Heart right ventricle (tissue), 16 donors: ENCODE measurements at regions of chr4 and their contacts with region 1.

Region 1: GRCh38 chr4:140252742-140253555 is 99.0 kb upstream of the MAML3 start:
- DNase-seq: peak; percentile 65 to 80
- ATAC-seq: peak; percentile 88 to 94 (median 92)
- H3K4me3 ChIP-seq: peak overlapping the region; percentile 43 to 95 (median 73)
- H3K27ac ChIP-seq: peak overlapping the region; percentile 72 to 99 (median 94)
- H3K4me1 ChIP-seq: peaks cover 0 to 45% (median 23%) of the 10 kb centered on the region in 9 donors
- H3K27me3 ChIP-seq: no peaks in the 10 kb centered on the region
- CTCF ChIP-seq: peak; percentile 89 to 98 (median 96)

Region 2: DNA sequence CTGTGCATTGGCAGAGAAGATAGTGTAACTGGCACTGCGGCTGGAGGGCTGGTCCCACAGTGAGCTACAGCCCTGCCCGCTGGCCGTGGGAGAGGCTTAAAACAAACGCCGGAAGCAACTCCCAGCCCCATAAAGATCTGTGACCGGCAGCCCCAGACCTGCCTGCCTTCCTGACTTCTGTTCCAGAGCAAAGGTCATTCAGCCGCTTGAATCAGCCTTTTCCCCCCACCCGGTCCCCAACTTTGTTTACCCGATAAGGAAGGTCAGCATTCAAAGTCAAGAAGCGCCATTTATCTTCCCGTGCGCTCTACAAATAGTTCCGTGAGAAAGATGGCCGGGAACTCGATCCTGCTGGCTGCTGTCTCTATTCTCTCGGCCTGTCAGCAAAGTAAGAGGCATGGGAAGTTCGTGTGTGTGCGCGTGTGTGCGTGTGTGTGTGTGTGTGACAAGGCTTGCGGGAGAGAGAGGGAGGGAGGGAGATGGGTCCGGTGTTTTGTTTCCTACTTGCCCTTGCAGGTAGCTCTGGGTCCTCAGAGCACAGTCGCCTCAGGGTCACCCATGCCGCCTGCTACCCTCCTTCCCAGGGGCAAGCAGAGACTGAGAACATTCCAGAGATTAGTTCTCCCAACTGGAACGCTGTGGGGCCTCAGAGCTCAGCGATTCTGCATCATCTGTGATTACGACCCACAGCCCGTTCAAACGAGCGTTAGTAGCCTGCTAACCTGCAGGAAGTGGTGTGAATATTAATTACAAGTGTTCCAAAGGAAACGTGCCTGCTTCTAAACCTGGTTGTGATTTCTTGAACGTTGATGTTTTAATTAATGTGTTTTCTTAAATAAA is 587.0 kb before region 1 on chr4 and contains the start of gene MGST2:
- intact Hi-C with region 1: loop called in 2 of 10 experiments (anchors 5 to 10 kb)
- DNase-seq: peak; percentile 80 to 85
- ATAC-seq: peak; percentile 87 to 96 (median 94)
- H3K4me3 ChIP-seq: peak within 1 kb of the TSS; percentile 27 to 68 (median 58)
- H3K27ac ChIP-seq: peak within 1 kb of the TSS; percentile 74 to 95 (median 92)
- H3K4me1 ChIP-seq: peaks cover 0 to 70% (median 46%) of the 10 kb centered on the region in 9 donors
- H3K27me3 ChIP-seq: no peaks in the 10 kb centered on the region
- CTCF ChIP-seq: peak in 1 of 9 donors; percentile 7
- total RNA-seq, gene MGST2: 99.1 to 125 (median 107) TPM

Region 3: GRCh38 chr4:139740531-139741041 is 512.4 kb before region 1 on chr4:
- intact Hi-C with region 1: loop called in 6 of 10 experiments (anchors 2 to 10 kb)
- DNase-seq: peak; percentile 55 to 82
- ATAC-seq: peak; percentile 88 to 95 (median 94)
- H3K4me3 ChIP-seq: peak overlapping the region in 3 of 10 donors; percentile 3 to 10 (median 3)
- H3K27ac ChIP-seq: peak overlapping the region; percentile 57 to 92 (median 82)
- H3K4me1 ChIP-seq: peaks cover 16 to 51% (median 45%) of the 10 kb centered on the region in 9 donors
- H3K27me3 ChIP-seq: no peaks in the 10 kb centered on the region
- CTCF ChIP-seq: peak in 5 of 9 donors; percentile 20 to 56 (median 44)

Region 4: DNA sequence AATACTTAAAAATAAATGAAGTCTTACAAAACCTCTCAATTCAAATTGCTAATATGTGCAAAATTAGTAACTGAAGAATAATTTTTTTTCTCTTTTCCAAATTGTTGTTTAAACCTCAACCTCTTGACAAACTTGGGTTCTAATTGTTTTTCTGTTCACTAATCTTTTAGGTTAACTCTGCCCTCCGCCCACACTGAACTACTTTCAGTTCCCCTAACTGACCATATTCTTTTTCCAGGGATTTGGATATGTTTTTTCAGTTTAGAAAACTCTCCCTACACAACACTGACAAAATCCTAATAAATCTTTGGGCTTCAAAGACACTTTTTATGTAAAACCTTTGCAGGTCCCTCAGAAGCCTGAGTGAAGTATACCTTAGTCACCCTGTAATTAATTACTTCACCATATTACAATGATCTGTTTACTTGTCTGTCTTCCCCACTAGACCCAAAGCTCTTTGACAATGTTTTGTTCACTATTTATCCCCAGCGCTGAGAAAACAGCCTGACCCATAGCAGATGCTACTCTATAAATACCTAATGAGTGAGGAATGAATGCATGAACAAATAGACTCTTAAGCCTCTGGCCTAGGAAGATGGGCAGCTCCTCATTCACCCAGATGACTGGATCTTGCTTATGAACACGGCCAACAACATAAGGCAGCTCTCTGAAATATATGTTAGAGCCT is 233.9 kb before region 1 on chr4:
- intact Hi-C with region 1: loop called in 3 of 10 experiments (anchors 5 kb)
- DNase-seq: no peak
- ATAC-seq: peak in 1 of 8 donors; percentile 21
- H3K4me3 ChIP-seq: no peak overlapping the region
- H3K27ac ChIP-seq: peak overlapping the region in 2 of 10 donors; percentile 3 to 10
- H3K4me1 ChIP-seq: peaks cover 0 to 28% (median 20%) of the 10 kb centered on the region in 9 donors
- H3K27me3 ChIP-seq: no peaks in the 10 kb centered on the region
- CTCF ChIP-seq: no peak

Region 5: DNA sequence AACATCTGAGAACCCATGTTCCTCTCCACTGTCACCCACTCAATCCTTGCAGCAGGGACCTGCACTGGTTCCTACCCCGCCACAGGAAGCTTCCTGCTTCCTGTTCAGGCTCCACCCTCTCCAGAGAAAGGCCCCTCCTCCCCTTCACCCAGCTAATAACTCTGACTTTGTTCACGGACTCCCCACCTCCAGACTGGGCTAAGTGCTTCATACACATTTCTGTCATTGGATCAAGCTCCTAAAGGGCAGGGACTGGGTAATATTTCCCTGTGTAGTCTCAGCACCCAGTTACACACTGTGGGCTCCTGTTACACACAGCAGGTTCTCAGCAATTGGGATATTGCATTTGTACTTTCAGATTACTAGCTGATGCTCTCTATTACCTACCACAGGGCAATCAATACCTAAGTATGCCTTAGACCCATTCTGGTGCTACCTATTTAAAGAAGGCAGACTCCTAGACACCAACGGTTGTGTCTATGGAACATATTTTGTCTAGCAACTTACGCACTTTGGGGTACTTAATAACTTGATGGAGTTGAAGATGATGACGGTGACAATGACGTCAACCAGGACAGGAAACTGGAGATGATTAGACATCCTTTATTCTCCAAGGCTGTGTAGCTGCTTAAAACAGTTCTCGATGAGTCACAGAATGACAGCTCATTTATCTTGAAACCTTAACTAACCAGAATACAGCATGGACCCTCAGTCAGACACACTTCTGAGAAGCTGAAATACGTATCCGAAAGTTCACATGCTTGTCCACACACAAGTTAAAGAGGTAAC is 157.1 kb before region 1 on chr4:
- intact Hi-C with region 1: loop called in 2 of 10 experiments (anchors 5 kb)
- DNase-seq: peak; percentile 23 to 72
- ATAC-seq: peak; percentile 21 to 77 (median 60)
- H3K4me3 ChIP-seq: peak overlapping the region in 3 of 10 donors; percentile 14 to 27 (median 26)
- H3K27ac ChIP-seq: peak overlapping the region; percentile 27 to 92 (median 82)
- H3K4me1 ChIP-seq: peaks cover 15 to 100% (median 86%) of the 10 kb centered on the region in 9 donors
- H3K27me3 ChIP-seq: no peaks in the 10 kb centered on the region
- CTCF ChIP-seq: no peak

Region 6: GRCh38 chr4:140116442-140117104 is 136.4 kb before region 1 on chr4:
- intact Hi-C with region 1: no loop called
- DNase-seq: no peak
- ATAC-seq: no peak
- H3K4me3 ChIP-seq: no peak overlapping the region
- H3K27ac ChIP-seq: no peak overlapping the region
- H3K4me1 ChIP-seq: peaks cover 0 to 12% (median 0%) of the 10 kb centered on the region in 9 donors
- H3K27me3 ChIP-seq: no peaks in the 10 kb centered on the region
- CTCF ChIP-seq: no peak

Region 7: DNA sequence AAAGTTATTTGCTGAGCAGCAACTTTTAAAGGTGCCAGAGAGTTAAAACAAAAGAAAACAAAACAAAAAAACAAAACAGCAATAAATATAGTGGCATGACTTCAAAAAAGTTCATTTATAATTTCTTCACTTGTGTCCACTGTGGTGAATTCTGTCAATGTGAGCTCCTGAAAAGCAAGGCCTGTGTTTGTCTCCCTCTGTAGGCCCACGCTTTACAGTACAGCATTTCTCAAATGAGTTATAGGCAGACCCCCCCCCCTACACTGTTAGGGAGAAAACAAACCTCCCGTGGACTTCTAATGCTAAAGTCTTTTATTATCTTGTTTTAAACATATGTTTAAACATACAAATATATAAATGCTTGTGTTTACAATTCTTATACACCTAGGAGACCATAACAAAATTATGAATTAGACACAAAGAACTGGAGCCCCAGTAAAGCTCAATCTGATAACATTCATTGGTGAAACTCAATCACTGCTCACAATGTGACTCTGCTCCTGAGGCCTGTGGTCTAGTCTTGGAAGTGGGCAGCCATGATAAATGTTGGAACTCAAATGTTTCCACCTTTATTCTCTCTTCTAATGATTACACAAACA is 73.5 kb after region 1 on chr4:
- intact Hi-C with region 1: loop called in 3 of 10 experiments (anchors 5 kb)
- DNase-seq: peak in 1 of 2 donors; percentile 28
- ATAC-seq: peak in 5 of 8 donors; percentile 67 to 85 (median 70)
- H3K4me3 ChIP-seq: no peak overlapping the region
- H3K27ac ChIP-seq: no peak overlapping the region
- H3K4me1 ChIP-seq: peaks cover 0 to 9% (median 0%) of the 10 kb centered on the region in 9 donors
- H3K27me3 ChIP-seq: no peaks in the 10 kb centered on the region
- CTCF ChIP-seq: peak; percentile 36 to 81 (median 68)

Region 8: GRCh38 chr4:140626661-140627376 is 373.9 kb after region 1 on chr4:
- intact Hi-C with region 1: no loop called
- DNase-seq: no peak
- ATAC-seq: no peak
- H3K4me3 ChIP-seq: no peak overlapping the region
- H3K27ac ChIP-seq: no peak overlapping the region
- H3K4me1 ChIP-seq: no peaks in the 10 kb centered on the region
- H3K27me3 ChIP-seq: no peaks in the 10 kb centered on the region
- CTCF ChIP-seq: no peak